MCF 10A (cell line): ENCODE measurements at regions of chr9 and their contacts with region 1.

Region 1: DNA sequence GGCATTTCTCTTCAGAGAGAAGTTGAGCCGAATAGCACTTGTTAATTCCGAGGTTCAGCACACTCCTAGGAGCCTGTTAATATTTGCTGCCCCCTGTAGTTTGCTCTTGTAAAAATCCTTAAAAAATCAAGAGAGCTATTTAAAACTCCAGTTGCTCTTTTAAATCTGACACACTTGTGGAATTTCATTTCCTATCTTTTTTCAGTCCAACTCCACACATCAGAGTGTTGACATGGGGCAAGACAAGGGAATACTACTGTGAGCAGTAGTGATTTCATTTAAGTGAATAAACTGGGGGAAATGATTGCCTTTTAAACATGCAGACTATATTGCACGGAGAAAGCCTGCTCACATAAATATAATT is 1096.3 kb upstream of the DMAC1 start:
- DNase-seq: peak; percentile 47
- H3K4me3 Mint-ChIP-seq: no peak overlapping the region
- H3K27ac Mint-ChIP-seq: no peak overlapping the region
- H3K4me1 Mint-ChIP-seq: peaks cover 10% of the 10 kb centered on the region
- H3K27me3 Mint-ChIP-seq: no peaks in the 10 kb centered on the region
- CTCF ChIP-seq: peak; percentile 46

Region 2: GRCh38 chr9:7570107-7570720 is 1325.6 kb before region 1 on chr9:
- CTCF ChIA-PET with region 1: interaction called, 6 read pairs
- POLR2A ChIA-PET with region 1: no interaction called
- intact Hi-C with region 1: loop called (anchors 5 kb)
- DNase-seq: peak; percentile 81
- H3K4me3 Mint-ChIP-seq: no peak overlapping the region
- H3K27ac Mint-ChIP-seq: no peak overlapping the region
- H3K4me1 Mint-ChIP-seq: no peaks in the 10 kb centered on the region
- H3K27me3 Mint-ChIP-seq: peaks cover 26% of the 10 kb centered on the region
- CTCF ChIP-seq: peak; percentile 86

Region 3: DNA sequence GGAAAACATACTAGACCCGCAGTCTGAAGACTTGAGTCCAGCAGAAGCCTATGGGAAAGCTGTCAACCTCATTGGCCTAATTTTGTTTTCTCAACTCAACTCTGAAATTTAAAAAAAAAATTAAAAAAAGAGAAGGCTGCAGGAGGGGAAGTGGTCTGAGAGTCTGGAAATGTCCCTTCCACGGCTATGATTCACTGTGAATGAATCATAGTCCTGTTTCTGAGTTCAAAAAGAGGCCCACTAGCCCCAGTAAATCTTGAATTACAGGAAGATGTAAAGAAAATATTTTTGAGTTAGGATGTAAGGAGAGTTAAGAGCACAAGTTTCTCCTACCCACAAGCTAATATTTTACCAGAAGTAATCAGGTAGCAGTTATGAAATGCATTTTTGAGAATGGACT is 530.8 kb before region 1 on chr9:
- CTCF ChIA-PET with region 1: no interaction called
- POLR2A ChIA-PET with region 1: no interaction called
- intact Hi-C with region 1: loop called (anchors 5 kb)
- DNase-seq: peak; percentile 38
- H3K4me3 Mint-ChIP-seq: no peak overlapping the region
- H3K27ac Mint-ChIP-seq: no peak overlapping the region
- H3K4me1 Mint-ChIP-seq: no peaks in the 10 kb centered on the region
- H3K27me3 Mint-ChIP-seq: no peaks in the 10 kb centered on the region
- CTCF ChIP-seq: no peak

Region 4: DNA sequence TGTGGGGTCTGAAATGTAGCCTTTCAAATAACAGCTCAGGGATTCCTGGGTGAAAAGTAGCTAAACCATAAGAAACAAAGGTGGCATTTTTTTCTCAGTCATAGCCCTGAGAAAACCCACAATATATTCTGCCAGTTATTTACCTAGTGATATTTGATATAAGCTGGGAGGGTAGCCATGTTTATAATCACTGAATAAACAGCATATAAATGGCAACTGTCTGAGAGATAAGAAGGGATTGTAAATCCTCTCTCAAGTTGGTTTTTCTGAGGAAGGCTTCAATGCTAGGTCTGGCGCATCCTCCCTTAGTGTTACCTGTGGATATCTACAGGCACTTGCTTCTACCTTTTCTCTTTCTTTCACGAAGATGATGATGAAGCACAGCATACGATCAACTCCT is 15.8 kb before region 1 on chr9:
- CTCF ChIA-PET with region 1: interaction called, 15 read pairs
- POLR2A ChIA-PET with region 1: no interaction called
- intact Hi-C with region 1: no loop called
- DNase-seq: no peak
- H3K4me3 Mint-ChIP-seq: no peak overlapping the region
- H3K27ac Mint-ChIP-seq: no peak overlapping the region
- H3K4me1 Mint-ChIP-seq: no peaks in the 10 kb centered on the region
- H3K27me3 Mint-ChIP-seq: no peaks in the 10 kb centered on the region
- CTCF ChIP-seq: no peak